B cell (primary cell): ENCODE measurements at regions of chr6 and their contacts with region 1.

Region 1: GRCh38 chr6:11496152-11497060 is 41.1 kb upstream of the TMEM170B start:
- DNase-seq: peak; percentile 88
- ATAC-seq: peak; percentile 88
- H3K4me3 ChIP-seq: no peak overlapping the region
- H3K4me3 Mint-ChIP-seq: peak overlapping the region; percentile 40
- H3K27ac ChIP-seq: peak overlapping the region in 1 of 2 donors; percentile 57
- H3K27ac Mint-ChIP-seq: peak overlapping the region; percentile 64
- H3K4me1 ChIP-seq: peaks cover 48 to 52% of the 10 kb centered on the region in 2 donors
- H3K4me1 Mint-ChIP-seq: peaks cover 32% of the 10 kb centered on the region
- H3K27me3 ChIP-seq: no peaks in the 10 kb centered on the region
- H3K27me3 Mint-ChIP-seq: no peaks in the 10 kb centered on the region
- CTCF ChIP-seq: peak; percentile 98

Region 2: DNA sequence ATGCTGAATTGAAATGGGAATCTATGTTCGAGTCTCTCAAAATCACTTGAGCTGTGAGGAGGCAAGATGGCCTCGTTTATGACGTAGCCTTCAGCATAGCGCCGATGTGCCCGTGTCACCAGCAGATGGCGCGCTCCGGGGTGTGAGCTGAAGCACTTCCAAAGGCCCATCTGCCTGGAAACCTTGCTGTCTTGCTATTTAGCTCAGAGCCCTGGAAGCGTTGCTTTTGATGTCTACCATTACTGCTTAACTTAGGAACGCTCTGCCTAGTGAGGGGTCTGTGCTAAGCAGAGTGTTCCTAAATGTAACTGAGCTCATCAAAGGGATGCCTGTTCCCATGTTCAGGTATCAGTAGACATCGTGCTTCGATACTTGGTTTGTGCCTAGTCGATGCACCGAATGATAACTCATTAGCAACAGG is 541.8 kb before region 1 on chr6:
- CTCF ChIA-PET with region 1: interaction called, 12 read pairs
- POLR2A ChIA-PET with region 1: no interaction called
- intact Hi-C with region 1: no loop called
- DNase-seq: peak; percentile 73
- ATAC-seq: peak; percentile 54
- H3K4me3 ChIP-seq: no peak overlapping the region
- H3K4me3 Mint-ChIP-seq: no peak overlapping the region
- H3K27ac ChIP-seq: no peak overlapping the region
- H3K27ac Mint-ChIP-seq: no peak overlapping the region
- H3K4me1 ChIP-seq: no peaks in the 10 kb centered on the region
- H3K4me1 Mint-ChIP-seq: no peaks in the 10 kb centered on the region
- H3K27me3 ChIP-seq: peaks cover 0 to 2% (median 0%) of the 10 kb centered on the region in 4 experiments
- H3K27me3 Mint-ChIP-seq: peaks cover 22% of the 10 kb centered on the region
- CTCF ChIP-seq: peak; percentile 81

Region 3: DNA sequence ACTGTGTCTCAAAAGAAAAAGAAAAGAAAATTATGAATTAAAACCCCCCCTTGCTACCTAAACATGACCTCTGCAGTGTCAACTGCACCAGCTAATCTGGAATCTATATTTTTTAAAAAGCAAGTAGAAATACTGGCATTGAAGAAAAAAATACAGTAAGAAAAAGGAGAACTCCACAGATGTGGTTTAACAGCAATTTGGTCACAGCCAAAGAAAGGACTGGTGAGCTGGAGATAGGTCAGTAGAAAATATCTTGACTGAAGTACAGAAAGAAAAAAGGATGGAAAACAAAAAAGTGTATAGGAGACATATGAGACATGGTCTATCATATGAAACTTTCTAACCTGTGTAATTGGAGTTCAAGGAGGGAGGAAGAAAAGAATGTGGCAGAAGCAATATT is 340.8 kb before region 1 on chr6:
- CTCF ChIA-PET with region 1: interaction called, 20 read pairs
- POLR2A ChIA-PET with region 1: no interaction called
- intact Hi-C with region 1: no loop called
- DNase-seq: no peak
- ATAC-seq: no peak
- H3K4me3 ChIP-seq: no peak overlapping the region
- H3K4me3 Mint-ChIP-seq: no peak overlapping the region
- H3K27ac ChIP-seq: no peak overlapping the region
- H3K27ac Mint-ChIP-seq: no peak overlapping the region
- H3K4me1 ChIP-seq: no peaks in the 10 kb centered on the region
- H3K4me1 Mint-ChIP-seq: peaks cover 8% of the 10 kb centered on the region
- H3K27me3 ChIP-seq: no peaks in the 10 kb centered on the region
- H3K27me3 Mint-ChIP-seq: no peaks in the 10 kb centered on the region
- CTCF ChIP-seq: no peak

Region 4: GRCh38 chr6:11232193-11232769 is 264.1 kb before region 1 on chr6 and contains the start of gene NEDD9:
- CTCF ChIA-PET with region 1: interaction called, 15 read pairs
- POLR2A ChIA-PET with region 1: no interaction called
- intact Hi-C with region 1: loop called (anchors 1 kb)
- DNase-seq: peak; percentile 93
- ATAC-seq: peak; percentile 100
- H3K4me3 ChIP-seq: peak within 1 kb of the TSS; percentile 52 to 76 (median 67)
- H3K4me3 Mint-ChIP-seq: peak within 1 kb of the TSS; percentile 98
- H3K27ac ChIP-seq: peak within 1 kb of the TSS; percentile 70 to 81
- H3K27ac Mint-ChIP-seq: peak within 1 kb of the TSS; percentile 93
- H3K4me1 ChIP-seq: peaks cover 35 to 37% of the 10 kb centered on the region in 2 donors
- H3K4me1 Mint-ChIP-seq: peaks cover 54% of the 10 kb centered on the region
- H3K27me3 ChIP-seq: no peaks in the 10 kb centered on the region
- H3K27me3 Mint-ChIP-seq: no peaks in the 10 kb centered on the region
- CTCF ChIP-seq: no peak
- total RNA-seq, gene NEDD9: 46.2 and 50.9 TPM in 2 replicates

Region 5: GRCh38 chr6:11346516-11346915 is 149.9 kb before region 1 on chr6:
- CTCF ChIA-PET with region 1: interaction called, 11 read pairs
- POLR2A ChIA-PET with region 1: no interaction called
- intact Hi-C with region 1: no loop called
- DNase-seq: no peak
- ATAC-seq: peak; percentile 68
- H3K4me3 ChIP-seq: no peak overlapping the region
- H3K4me3 Mint-ChIP-seq: peak overlapping the region; percentile 30
- H3K27ac ChIP-seq: peak overlapping the region in 1 of 2 donors; percentile 20
- H3K27ac Mint-ChIP-seq: peak overlapping the region; percentile 56
- H3K4me1 ChIP-seq: peaks cover 42 to 54% of the 10 kb centered on the region in 2 donors
- H3K4me1 Mint-ChIP-seq: peaks cover 90% of the 10 kb centered on the region
- H3K27me3 ChIP-seq: no peaks in the 10 kb centered on the region
- H3K27me3 Mint-ChIP-seq: no peaks in the 10 kb centered on the region
- CTCF ChIP-seq: no peak

Region 6: DNA sequence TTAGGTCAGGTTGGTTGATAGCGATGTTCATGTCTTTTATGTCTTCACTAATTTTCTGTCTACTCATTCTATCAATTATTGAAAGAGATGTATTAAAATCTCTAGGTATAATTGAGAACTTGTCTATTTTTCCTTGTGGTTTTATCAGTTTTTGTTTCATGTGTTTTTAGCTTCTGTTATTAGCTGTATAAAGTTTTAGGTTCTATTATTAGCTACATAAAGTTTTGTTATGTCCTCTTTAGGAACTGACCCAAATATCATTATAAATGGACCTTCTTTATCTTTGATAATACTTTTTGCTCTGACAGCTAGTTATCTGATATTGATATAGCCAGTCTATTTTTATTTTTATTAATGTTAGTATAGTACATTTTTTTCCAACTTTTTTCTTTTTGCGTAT is 51.3 kb before region 1 on chr6:
- CTCF ChIA-PET with region 1: interaction called, 3 read pairs
- POLR2A ChIA-PET with region 1: interaction called, 4 read pairs
- intact Hi-C with region 1: loop called (anchors 10 kb)
- DNase-seq: no peak
- ATAC-seq: no peak
- H3K4me3 ChIP-seq: peak overlapping the region in 1 of 5 experiments; percentile 4
- H3K4me3 Mint-ChIP-seq: peak overlapping the region; percentile 27
- H3K27ac ChIP-seq: peak overlapping the region in 1 of 2 donors; percentile 62
- H3K27ac Mint-ChIP-seq: peak overlapping the region; percentile 11
- H3K4me1 ChIP-seq: peaks cover 32 to 45% of the 10 kb centered on the region in 2 donors
- H3K4me1 Mint-ChIP-seq: peaks cover 60% of the 10 kb centered on the region
- H3K27me3 ChIP-seq: no peaks in the 10 kb centered on the region
- H3K27me3 Mint-ChIP-seq: no peaks in the 10 kb centered on the region
- CTCF ChIP-seq: no peak

Region 7: GRCh38 chr6:11509471-11509870 is 13.1 kb after region 1 on chr6:
- CTCF ChIA-PET with region 1: interaction called, 18 read pairs
- POLR2A ChIA-PET with region 1: no interaction called
- intact Hi-C with region 1: no loop called
- DNase-seq: no peak
- ATAC-seq: no peak
- H3K4me3 ChIP-seq: no peak overlapping the region
- H3K4me3 Mint-ChIP-seq: no peak overlapping the region
- H3K27ac ChIP-seq: no peak overlapping the region
- H3K27ac Mint-ChIP-seq: no peak overlapping the region
- H3K4me1 ChIP-seq: peaks cover 5 to 7% of the 10 kb centered on the region in 2 donors
- H3K4me1 Mint-ChIP-seq: peaks cover 10% of the 10 kb centered on the region
- H3K27me3 ChIP-seq: no peaks in the 10 kb centered on the region
- H3K27me3 Mint-ChIP-seq: no peaks in the 10 kb centered on the region
- CTCF ChIP-seq: no peak